CD8-positive, alpha-beta T cell (primary cell): ENCODE measurements at regions of chr9 and their contacts with region 1.

Region 1: GRCh38 chr9:128455849-128456612 is at the start of gene ODF2:
- DNase-seq: peak; percentile 96 to 99 (median 99)
- ATAC-seq: peak; percentile 90
- H3K4me3 ChIP-seq: peak within 1 kb of the TSS; percentile 74 to 87
- H3K4me3 Mint-ChIP-seq: peak within 1 kb of the TSS; percentile 89
- H3K27ac ChIP-seq: peak within 1 kb of the TSS; percentile 87
- H3K27ac Mint-ChIP-seq: peak within 1 kb of the TSS; percentile 91
- H3K4me1 ChIP-seq: peaks cover 8% of the 10 kb centered on the region
- H3K4me1 Mint-ChIP-seq: peaks cover 22% of the 10 kb centered on the region
- H3K27me3 ChIP-seq: no peaks in the 10 kb centered on the region
- H3K27me3 Mint-ChIP-seq: no peaks in the 10 kb centered on the region
- CTCF ChIP-seq: no peak
- total RNA-seq, gene ODF2: 15.0 to 17.2 TPM

Region 2: DNA sequence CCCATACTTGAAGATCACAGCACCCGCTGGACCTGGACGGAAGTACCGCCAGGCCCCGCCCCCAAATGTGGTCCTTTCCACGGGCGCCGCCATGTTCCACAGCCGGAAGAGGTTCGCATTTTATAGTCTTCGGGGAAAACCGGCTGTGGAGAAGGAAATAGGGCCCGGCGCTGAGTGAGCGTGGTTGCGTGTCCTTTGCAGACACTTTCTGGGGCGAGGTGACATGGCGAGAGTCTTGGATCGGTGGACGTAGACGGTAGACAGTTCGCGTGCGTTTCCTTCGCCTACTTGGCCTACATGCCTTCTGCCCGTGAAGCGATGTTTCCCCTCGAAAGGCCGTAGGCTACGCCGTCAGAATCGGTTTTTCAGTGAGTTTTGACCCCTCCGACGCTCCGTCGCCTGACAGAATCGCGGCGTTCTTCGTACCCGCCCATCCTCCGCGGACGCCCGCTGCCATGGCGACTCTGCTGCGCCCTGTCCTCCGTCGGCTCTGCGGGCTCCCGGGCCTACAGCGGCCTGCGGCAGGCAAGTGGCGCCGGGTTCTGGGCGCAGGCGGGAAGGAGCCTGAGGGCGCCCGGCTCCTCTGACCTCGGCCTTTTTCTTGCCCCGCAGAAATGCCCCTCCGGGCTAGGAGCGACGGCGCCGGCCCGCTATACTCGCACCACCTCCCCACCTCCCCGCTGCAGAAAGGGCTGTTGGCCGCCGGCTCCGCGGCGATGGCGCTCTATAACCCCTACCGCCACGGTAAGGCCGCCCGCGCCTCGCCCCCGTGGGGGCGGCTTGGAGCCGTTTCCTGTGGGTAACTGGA is 133.4 kb before region 1 on chr9 and contains the starts of genes COQ4 and TRUB2:
- CTCF ChIA-PET with region 1: no interaction called
- POLR2A ChIA-PET with region 1: no interaction called
- intact Hi-C with region 1: loop called (anchors 1 kb)
- DNase-seq: peak; percentile 83 to 97 (median 92)
- ATAC-seq: peak; percentile 86
- H3K4me3 ChIP-seq: peak within 1 kb of the TSS; percentile 88 to 89
- H3K4me3 Mint-ChIP-seq: peak within 1 kb of the TSS; percentile 95
- H3K27ac ChIP-seq: peak within 1 kb of the TSS; percentile 80 to 89
- H3K27ac Mint-ChIP-seq: peak within 1 kb of the TSS; percentile 96
- H3K4me1 ChIP-seq: peaks cover 17% of the 10 kb centered on the region
- H3K4me1 Mint-ChIP-seq: peaks cover 30% of the 10 kb centered on the region
- H3K27me3 ChIP-seq: no peaks in the 10 kb centered on the region
- H3K27me3 Mint-ChIP-seq: no peaks in the 10 kb centered on the region
- CTCF ChIP-seq: no peak
- total RNA-seq, gene COQ4: 18.2 to 20.1 TPM
- total RNA-seq, gene TRUB2: 9.8 to 12.9 TPM

Region 3: GRCh38 chr9:128438343-128439109 is 17.5 kb before region 1 on chr9:
- CTCF ChIA-PET with region 1: interaction called, 12 read pairs
- POLR2A ChIA-PET with region 1: no interaction called
- intact Hi-C with region 1: loop called in 1 of 2 experiments (anchors 1 kb)
- DNase-seq: peak; percentile 63 to 89 (median 79)
- ATAC-seq: peak; percentile 97
- H3K4me3 ChIP-seq: no peak overlapping the region
- H3K4me3 Mint-ChIP-seq: no peak overlapping the region
- H3K27ac ChIP-seq: no peak overlapping the region
- H3K27ac Mint-ChIP-seq: no peak overlapping the region
- H3K4me1 ChIP-seq: peaks cover 9% of the 10 kb centered on the region
- H3K4me1 Mint-ChIP-seq: peaks cover 3% of the 10 kb centered on the region
- H3K27me3 ChIP-seq: no peaks in the 10 kb centered on the region
- H3K27me3 Mint-ChIP-seq: no peaks in the 10 kb centered on the region
- CTCF ChIP-seq: peak; percentile 66

Region 4: GRCh38 chr9:128656416-128657343 is 200.6 kb after region 1 on chr9 and contains the start of gene DYNC2I2:
- CTCF ChIA-PET with region 1: no interaction called
- POLR2A ChIA-PET with region 1: no interaction called
- intact Hi-C with region 1: loop called in 1 of 2 experiments (anchors 1 kb)
- DNase-seq: peak; percentile 92 to 98 (median 97)
- ATAC-seq: peak; percentile 96
- H3K4me3 ChIP-seq: peak within 1 kb of the TSS; percentile 72 to 76
- H3K4me3 Mint-ChIP-seq: peak within 1 kb of the TSS; percentile 95
- H3K27ac ChIP-seq: peak within 1 kb of the TSS; percentile 88 to 97
- H3K27ac Mint-ChIP-seq: peak within 1 kb of the TSS; percentile 99
- H3K4me1 ChIP-seq: peaks cover 5% of the 10 kb centered on the region
- H3K4me1 Mint-ChIP-seq: peaks cover 7% of the 10 kb centered on the region
- H3K27me3 ChIP-seq: no peaks in the 10 kb centered on the region
- H3K27me3 Mint-ChIP-seq: no peaks in the 10 kb centered on the region
- CTCF ChIP-seq: no peak
- total RNA-seq, gene DYNC2I2: 3.7 to 3.9 TPM

Region 5: DNA sequence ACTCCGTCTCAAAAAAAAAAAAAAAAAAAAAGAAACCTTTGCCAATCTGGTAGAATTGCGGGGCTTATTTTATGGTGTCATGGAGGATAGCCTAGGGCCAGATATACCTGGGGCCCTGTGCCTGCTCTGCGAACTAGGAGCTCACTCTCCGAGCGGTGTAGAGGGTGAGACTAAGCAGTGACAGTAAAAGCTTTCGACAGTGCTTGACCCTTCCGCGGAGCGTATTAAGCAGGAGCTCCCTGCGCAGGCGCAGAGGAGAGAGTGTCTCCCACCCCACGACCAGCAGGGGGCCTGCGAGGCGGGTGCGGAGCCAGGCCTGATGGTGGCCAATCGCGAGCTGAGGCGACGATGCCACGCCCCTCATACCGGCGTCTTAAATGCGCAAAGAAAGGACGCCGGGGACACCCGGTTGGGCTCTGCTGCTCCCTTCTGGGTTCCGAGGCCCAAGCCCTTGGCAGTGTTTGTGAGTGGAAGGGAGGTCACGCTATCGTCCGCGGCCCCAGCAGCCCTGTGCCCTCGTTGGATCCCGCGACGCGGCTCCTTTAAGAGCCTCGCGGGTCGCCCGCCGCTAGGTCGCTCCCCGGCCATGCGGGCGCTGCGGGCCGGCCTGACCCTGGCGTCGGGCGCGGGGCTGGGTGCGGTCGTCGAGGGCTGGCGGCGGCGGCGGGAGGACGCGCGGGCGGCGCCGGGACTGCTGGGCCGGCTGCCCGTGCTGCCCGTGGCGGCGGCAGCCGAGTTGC is 362.2 kb after region 1 on chr9 and contains the start of gene ENDOG:
- CTCF ChIA-PET with region 1: no interaction called
- POLR2A ChIA-PET with region 1: no interaction called
- intact Hi-C with region 1: loop called in 1 of 2 experiments (anchors 2 kb)
- DNase-seq: peak; percentile 94 to 98 (median 97)
- ATAC-seq: peak; percentile 96
- H3K4me3 ChIP-seq: peak within 1 kb of the TSS; percentile 59 to 75
- H3K4me3 Mint-ChIP-seq: peak within 1 kb of the TSS; percentile 91
- H3K27ac ChIP-seq: peak within 1 kb of the TSS; percentile 52 to 67
- H3K27ac Mint-ChIP-seq: peak within 1 kb of the TSS; percentile 87
- H3K4me1 ChIP-seq: peaks cover 12% of the 10 kb centered on the region
- H3K4me1 Mint-ChIP-seq: peaks cover 21% of the 10 kb centered on the region
- H3K27me3 ChIP-seq: no peaks in the 10 kb centered on the region
- H3K27me3 Mint-ChIP-seq: no peaks in the 10 kb centered on the region
- CTCF ChIP-seq: peak; percentile 98
- total RNA-seq, gene ENDOG: 6.2 to 6.4 TPM